ENCODE measurements at regions of chr19 and their contacts with region 1.

Region 1: DNA sequence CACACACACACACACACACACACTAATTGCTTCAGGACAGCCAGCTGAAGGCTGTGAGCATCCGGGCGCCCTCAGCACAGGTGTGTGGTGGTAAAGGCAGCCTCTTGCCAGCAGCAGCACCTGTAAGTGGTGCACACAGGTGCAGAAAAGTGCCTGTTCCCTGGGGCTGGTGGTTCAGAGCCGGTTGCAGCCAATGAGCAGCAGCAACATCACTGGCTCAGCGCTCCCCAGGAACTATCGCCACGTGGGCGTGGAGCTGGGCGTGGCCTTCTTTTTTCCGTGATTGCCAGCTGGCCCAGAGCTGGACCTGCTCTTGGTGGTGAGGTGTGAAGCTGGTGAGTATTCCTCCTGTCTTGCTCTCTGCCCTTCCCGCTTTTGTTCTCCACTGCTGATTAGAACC is at the start of gene NLRP5:
- DNase-seq: no peak
- ATAC-seq: peak; percentile 56
- H3K4me3 ChIP-seq: no peak within 1 kb of the TSS
- H3K27ac ChIP-seq: no peak within 1 kb of the TSS
- H3K4me1 ChIP-seq: no peaks in the 10 kb centered on the region
- H3K27me3 ChIP-seq: peaks cover 10% of the 10 kb centered on the region
- CTCF ChIP-seq: no peak
- total RNA-seq, gene NLRP5: not detected

Region 2: DNA sequence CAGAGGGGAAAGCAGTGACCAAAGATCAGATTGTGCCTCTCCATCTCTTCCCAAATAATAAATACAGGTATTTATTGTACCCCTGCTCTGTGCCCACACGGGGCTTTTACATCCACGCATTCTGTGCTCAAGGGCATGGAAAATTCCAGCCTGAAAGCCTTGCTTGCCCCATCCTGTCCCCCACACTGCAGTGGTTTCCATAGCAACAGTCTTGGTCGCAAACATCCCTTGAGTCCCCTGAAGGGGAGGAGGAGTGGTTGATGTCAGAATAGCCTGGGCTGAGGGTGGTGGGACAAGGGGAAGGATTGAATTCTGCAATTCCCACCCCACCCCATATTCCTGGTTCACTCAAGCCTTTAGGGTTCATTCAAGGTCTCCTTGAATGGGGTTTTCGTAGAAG is 1092.3 kb after region 1 on chr19:
- CTCF ChIA-PET with region 1: no interaction called
- POLR2A ChIA-PET with region 1: interaction called, 10 read pairs
- in situ Hi-C with region 1: no loop called
- intact Hi-C with region 1: no loop called
- DNase-seq: no peak
- ATAC-seq: no peak
- H3K4me3 ChIP-seq: no peak overlapping the region
- H3K27ac ChIP-seq: no peak overlapping the region
- H3K4me1 ChIP-seq: no peaks in the 10 kb centered on the region
- H3K27me3 ChIP-seq: no peaks in the 10 kb centered on the region
- CTCF ChIP-seq: no peak